ENCODE measurements at regions of chr14 and their contacts with region 1.

Region 1: GRCh38 chr14:105490572-105491366 is at the start of gene TEDC1:
- DNase-seq: peak; percentile 100
- H3K4me3 ChIP-seq: peak within 1 kb of the TSS; percentile 71
- CTCF ChIP-seq: peak; percentile 77

Region 2: GRCh38 chr14:104940526-104941150 is 550.1 kb before region 1 on chr14:
- CTCF ChIA-PET with region 1: no interaction called
- POLR2A ChIA-PET with region 1: no interaction called
- DNase-seq: no peak
- H3K4me3 ChIP-seq: no peak overlapping the region
- CTCF ChIP-seq: no peak

Region 3: DNA sequence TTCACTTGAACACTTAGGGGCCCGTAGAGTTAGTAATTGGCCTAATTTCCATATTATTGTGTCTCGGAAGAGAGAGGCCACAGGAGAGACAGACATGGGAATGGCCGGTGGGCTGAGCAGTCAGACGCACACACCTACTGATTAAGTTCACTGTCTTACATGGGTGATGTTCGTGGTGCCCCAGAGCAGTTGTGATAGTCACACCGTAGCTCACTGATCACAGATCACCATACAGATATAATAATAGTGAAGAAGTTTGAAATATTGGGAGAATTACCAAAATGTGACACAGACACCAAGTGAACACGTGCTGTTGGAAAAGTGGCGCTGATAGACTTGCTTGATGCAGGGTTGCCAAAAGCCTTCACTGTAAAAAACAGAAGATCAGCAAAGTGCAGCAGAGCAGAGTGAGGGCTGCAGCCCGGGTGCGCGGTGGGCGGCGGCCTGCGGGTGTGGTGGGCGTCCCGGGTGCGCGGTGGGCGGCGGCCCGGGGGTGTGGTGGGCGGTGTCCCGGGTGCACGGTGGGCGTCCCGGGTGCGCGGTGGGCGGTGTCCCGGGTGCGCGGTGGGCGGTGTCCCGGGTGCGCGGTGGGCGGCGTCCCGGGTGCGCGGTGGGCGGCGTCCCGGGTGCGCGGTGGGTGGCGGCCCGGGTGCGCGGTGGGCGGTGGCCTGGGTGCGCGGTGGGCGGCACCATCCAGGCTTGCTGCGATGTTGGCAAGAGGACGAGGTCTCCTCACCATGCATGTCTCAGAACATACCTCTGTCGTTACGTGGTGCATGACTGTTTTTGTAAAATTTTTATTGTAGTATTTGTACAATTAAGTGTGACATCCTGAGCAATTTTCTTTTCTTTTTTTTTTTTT is 126.7 kb before region 1 on chr14:
- CTCF ChIA-PET with region 1: interaction called, 91 read pairs
- POLR2A ChIA-PET with region 1: no interaction called
- DNase-seq: no peak
- H3K4me3 ChIP-seq: peak overlapping the region; percentile 32
- CTCF ChIP-seq: no peak

Region 4: DNA sequence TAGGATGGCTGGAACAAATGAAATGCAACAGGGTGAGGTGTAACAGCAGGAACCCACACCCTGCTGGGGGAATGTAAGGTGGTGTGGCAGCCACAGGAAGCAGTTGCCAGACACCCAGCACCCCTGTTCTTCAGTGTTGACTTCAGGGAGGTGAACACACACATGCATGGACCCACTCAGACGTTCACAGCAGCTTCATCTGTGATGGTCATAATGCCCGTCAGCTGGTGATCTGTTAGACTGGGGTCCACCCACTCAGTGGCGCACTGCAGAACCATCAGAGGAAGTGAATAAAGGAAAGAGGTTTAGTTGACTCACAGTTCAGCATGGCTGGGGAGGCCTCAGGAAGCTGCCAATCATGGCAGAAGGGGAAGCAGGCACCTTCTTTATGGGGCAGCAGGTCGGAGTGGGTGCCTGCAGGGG is 115.1 kb before region 1 on chr14:
- CTCF ChIA-PET with region 1: interaction called, 91 read pairs
- POLR2A ChIA-PET with region 1: no interaction called
- DNase-seq: no peak
- H3K4me3 ChIP-seq: no peak overlapping the region
- CTCF ChIP-seq: no peak

Region 5: DNA sequence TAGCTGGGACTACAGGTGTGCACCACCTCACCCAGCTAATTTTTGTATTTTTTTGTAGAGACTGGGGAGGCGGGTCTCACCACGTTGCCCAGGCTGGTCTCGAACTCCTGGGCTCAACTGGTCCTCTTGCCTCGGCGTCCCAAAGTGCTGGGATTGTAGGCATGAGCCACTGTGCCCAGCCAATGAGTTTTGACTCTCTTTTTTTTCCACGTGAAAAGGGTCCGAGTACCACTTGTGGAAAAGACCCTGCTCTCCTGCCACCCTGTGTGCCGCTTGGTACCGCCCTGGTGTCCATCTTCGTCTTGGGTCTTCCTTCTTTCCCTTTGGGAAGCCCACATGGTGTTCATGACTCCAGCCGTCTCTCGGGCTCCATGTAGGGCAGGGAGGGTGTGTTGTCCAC is 17.9 kb after region 1 on chr14:
- CTCF ChIA-PET with region 1: no interaction called
- POLR2A ChIA-PET with region 1: no interaction called
- DNase-seq: no peak
- H3K4me3 ChIP-seq: no peak overlapping the region
- CTCF ChIP-seq: no peak

Region 6: GRCh38 chr14:105617201-105617777 is 126.5 kb after region 1 on chr14:
- CTCF ChIA-PET with region 1: no interaction called
- POLR2A ChIA-PET with region 1: no interaction called
- DNase-seq: no peak
- H3K4me3 ChIP-seq: no peak overlapping the region
- CTCF ChIP-seq: no peak

Region 7: DNA sequence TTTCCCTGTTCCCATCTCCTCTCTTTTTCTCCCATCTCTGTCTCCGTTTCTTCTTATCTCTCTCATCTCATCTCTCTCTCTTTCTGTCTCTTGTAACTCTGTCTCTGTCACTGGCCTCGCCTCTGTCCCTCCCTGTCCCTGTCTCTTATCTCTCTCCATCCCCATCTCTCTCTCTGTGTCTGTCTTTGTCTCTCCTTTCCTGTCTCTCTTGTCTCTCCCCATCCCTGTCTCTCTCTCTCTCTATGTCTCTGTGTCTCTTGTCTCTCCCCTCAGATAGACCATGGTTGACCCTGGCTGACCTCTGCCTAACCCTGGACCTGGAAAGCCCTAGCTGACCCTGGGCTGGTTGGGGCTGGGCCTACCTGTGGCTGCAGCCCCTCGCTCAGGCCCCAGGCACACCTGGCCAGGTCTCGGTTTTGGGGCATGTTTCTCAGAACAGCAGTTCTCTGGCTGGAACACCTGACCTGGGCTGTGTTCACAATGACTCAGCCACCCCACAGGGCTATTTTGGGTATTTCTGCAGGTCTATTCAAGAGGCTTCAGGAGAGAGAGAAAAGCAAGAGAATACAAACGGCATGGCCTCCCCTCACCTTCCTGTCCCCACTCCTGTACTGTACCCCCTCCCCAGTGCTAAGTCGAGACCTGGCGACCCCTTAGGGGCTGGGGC is 210.0 kb after region 1 on chr14:
- CTCF ChIA-PET with region 1: no interaction called
- POLR2A ChIA-PET with region 1: no interaction called
- DNase-seq: no peak
- H3K4me3 ChIP-seq: no peak overlapping the region
- CTCF ChIP-seq: no peak

Measured in AG04449 (cell line).